ENCODE measurements at regions of chr4 and their contacts with region 1.

Region 1: DNA sequence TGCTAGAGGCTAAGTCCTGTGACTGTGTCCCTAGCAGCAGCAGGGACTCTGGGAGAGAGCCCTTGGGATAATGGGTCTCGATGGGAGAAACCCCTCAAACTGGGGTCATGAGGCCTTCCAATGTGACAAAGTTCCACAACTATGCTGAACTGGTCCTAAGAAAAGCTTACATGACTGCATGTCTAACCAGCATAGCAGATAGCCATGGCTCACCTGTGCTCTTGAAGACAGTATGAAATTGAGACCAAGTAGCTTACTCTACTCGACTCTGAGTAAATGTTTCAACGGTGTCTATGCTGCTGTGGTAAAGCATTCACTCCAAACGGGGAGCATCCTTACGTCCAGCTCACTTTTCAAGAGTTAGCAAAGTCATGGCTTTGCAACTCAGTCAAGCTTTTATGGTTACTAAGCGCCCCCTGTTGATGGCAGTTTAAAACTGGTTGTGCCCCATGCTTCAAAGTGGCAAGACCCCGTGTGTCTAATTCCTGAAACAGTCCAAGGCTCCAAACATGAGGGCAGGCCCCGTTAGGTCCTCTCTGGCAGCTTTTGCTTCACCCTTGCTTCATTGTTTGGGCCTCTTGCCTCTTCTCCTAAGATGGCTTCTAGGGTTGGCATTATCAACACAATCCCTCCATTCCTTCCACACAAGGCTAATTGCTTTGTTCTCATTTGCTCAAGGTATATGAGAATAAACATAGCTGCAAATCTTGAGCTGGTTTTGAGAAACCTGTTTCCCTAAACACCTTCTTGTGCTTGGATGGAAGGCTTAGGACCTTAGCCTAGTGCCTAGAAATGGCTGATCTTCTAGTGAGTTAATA is 46.6 kb downstream of the CCNG2 start:
- DNase-seq: peak; percentile 45 to 68 (median 63)
- H3K4me3 ChIP-seq: no peak overlapping the region
- H3K4me3 Mint-ChIP-seq: no peak overlapping the region
- H3K27ac ChIP-seq: no peak overlapping the region
- H3K27ac Mint-ChIP-seq: no peak overlapping the region
- H3K4me1 ChIP-seq: no peaks in the 10 kb centered on the region
- H3K4me1 Mint-ChIP-seq: no peaks in the 10 kb centered on the region
- H3K27me3 ChIP-seq: no peaks in the 10 kb centered on the region
- H3K27me3 Mint-ChIP-seq: no peaks in the 10 kb centered on the region

Region 2: DNA sequence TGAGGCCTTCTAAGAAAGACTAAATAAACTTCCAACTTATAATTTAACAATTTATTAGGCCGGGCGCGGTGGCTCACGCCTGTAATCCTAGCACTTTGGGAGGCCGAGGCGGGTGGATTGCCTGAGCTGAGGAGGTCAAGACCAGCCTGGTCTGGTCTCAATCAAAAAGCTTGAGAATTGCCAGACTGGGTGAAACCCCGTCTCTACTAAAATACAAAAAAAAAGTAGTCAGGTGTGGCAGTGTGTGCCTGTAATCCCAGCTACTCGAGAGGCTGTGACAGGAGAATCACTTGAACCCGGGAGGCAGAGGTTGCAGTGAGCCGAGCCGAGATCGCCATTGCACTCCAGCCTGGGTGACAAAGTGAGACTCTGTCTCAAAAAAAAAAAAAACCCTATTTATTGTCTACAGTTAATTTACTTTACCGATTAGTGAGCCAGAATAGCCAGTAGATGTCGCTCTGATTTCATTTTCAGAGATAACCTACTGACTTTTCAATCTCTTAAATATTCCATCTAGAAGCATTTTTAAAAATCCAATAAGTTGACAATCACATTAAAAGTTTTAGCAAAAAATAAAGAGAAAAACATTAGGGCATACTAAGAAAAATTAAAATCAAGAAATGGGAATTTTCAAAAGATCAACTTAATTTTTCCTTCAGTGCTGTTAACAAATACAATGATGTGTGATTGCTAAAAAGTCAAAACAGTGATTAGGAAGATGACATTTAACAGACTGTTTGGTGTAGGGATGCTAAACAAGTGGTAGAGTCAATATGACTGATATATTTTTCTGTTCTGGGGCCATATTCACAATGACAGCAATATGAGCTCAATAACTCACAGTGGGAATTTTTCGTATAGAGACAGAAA is 772.8 kb before region 1 on chr4:
- CTCF ChIA-PET with region 1: interaction called, 41 read pairs
- POLR2A ChIA-PET with region 1: no interaction called
- intact Hi-C with region 1: loop called (anchors 2 kb)
- DNase-seq: peak in 4 of 5 donors; percentile 15 to 28 (median 18)
- H3K4me3 ChIP-seq: no peak overlapping the region
- H3K4me3 Mint-ChIP-seq: no peak overlapping the region
- H3K27ac ChIP-seq: no peak overlapping the region
- H3K27ac Mint-ChIP-seq: no peak overlapping the region
- H3K4me1 ChIP-seq: no peaks in the 10 kb centered on the region
- H3K4me1 Mint-ChIP-seq: peaks cover 0 to 2% (median under 1%) of the 10 kb centered on the region in 4 donors
- H3K27me3 ChIP-seq: no peaks in the 10 kb centered on the region
- H3K27me3 Mint-ChIP-seq: peaks cover 7 to 8% of the 10 kb centered on the region in 2 donors

Region 3: GRCh38 chr4:77052352-77052751 is 151.2 kb before region 1 on chr4:
- CTCF ChIA-PET with region 1: interaction called, 148 read pairs
- POLR2A ChIA-PET with region 1: interaction called, 3 read pairs
- intact Hi-C with region 1: loop called (anchors 1 kb)
- DNase-seq: peak in 4 of 5 donors; percentile 38 to 59 (median 42)
- H3K4me3 ChIP-seq: no peak overlapping the region
- H3K4me3 Mint-ChIP-seq: no peak overlapping the region
- H3K27ac ChIP-seq: no peak overlapping the region
- H3K27ac Mint-ChIP-seq: peak overlapping the region in 6 of 7 donors; percentile 61 to 70 (median 68)
- H3K4me1 ChIP-seq: no peaks in the 10 kb centered on the region
- H3K4me1 Mint-ChIP-seq: peaks cover 0 to 15% (median 5%) of the 10 kb centered on the region in 4 donors
- H3K27me3 ChIP-seq: no peaks in the 10 kb centered on the region
- H3K27me3 Mint-ChIP-seq: no peaks in the 10 kb centered on the region

Region 4: GRCh38 chr4:77095101-77095821 is 108.3 kb before region 1 on chr4:
- CTCF ChIA-PET with region 1: interaction called, 440 read pairs
- POLR2A ChIA-PET with region 1: interaction called, 9 read pairs
- intact Hi-C with region 1: loop called (anchors 1 kb)
- DNase-seq: peak; percentile 58 to 70 (median 64)
- H3K4me3 ChIP-seq: no peak overlapping the region
- H3K4me3 Mint-ChIP-seq: no peak overlapping the region
- H3K27ac ChIP-seq: no peak overlapping the region
- H3K27ac Mint-ChIP-seq: peak overlapping the region in 1 of 7 donors; percentile 5
- H3K4me1 ChIP-seq: peaks cover 11% of the 10 kb centered on the region
- H3K4me1 Mint-ChIP-seq: peaks cover 9 to 19% (median 13%) of the 10 kb centered on the region in 4 donors
- H3K27me3 ChIP-seq: no peaks in the 10 kb centered on the region
- H3K27me3 Mint-ChIP-seq: no peaks in the 10 kb centered on the region

Region 5: DNA sequence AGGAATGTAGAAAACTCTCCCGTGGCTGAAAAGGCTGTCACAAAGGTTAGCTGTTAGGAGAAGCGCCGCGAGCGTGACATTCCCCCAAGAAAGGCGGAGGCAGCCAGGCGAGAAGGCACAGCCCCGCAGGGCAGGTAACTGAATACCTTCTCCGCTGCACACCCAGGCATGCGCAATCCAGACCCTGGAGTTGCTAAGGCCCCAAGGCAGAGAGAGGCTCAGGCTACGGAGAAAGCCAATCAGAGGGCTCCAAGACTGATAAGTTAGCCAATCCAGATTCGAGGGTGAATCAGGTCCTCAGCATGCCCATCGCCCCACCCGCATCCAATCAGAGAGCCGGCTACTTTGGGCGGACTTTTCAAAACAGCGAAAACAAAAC is 47.1 kb before region 1 on chr4:
- CTCF ChIA-PET with region 1: interaction called, 31 read pairs
- POLR2A ChIA-PET with region 1: interaction called, 3 read pairs
- intact Hi-C with region 1: no loop called
- DNase-seq: peak; percentile 99
- H3K4me3 ChIP-seq: peak overlapping the region; percentile 87 to 98
- H3K4me3 Mint-ChIP-seq: peak overlapping the region; percentile 92 to 100 (median 98)
- H3K27ac ChIP-seq: peak overlapping the region; percentile 77
- H3K27ac Mint-ChIP-seq: peak overlapping the region; percentile 97 to 99 (median 98)
- H3K4me1 ChIP-seq: peaks cover 35% of the 10 kb centered on the region
- H3K4me1 Mint-ChIP-seq: peaks cover 16 to 54% (median 24%) of the 10 kb centered on the region in 4 donors
- H3K27me3 ChIP-seq: no peaks in the 10 kb centered on the region
- H3K27me3 Mint-ChIP-seq: peaks cover 0 to 6% of the 10 kb centered on the region in 2 donors

Region 6: DNA sequence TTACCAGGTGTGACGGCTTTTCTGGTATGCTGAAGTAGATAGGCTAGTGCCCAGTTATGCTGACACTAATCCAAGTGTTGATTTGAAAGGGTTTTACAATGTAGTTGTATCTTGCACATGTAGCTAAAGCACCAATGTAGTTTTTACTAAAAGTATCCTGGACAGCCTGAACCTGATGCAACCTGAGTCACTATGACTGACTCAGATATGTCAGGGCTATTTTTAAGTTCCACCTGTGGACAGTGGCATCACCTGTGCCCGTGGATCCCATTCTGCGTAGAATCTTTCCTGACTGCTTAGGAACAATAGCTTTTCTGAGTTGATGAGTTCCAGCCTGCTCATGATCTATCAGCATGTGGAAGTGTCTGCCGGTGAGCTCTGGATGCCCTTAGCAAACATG is 11.5 kb after region 1 on chr4:
- CTCF ChIA-PET with region 1: interaction called, 37 read pairs
- POLR2A ChIA-PET with region 1: no interaction called
- intact Hi-C with region 1: no loop called
- DNase-seq: no peak
- H3K4me3 ChIP-seq: no peak overlapping the region
- H3K4me3 Mint-ChIP-seq: no peak overlapping the region
- H3K27ac ChIP-seq: no peak overlapping the region
- H3K27ac Mint-ChIP-seq: no peak overlapping the region
- H3K4me1 ChIP-seq: no peaks in the 10 kb centered on the region
- H3K4me1 Mint-ChIP-seq: no peaks in the 10 kb centered on the region
- H3K27me3 ChIP-seq: no peaks in the 10 kb centered on the region
- H3K27me3 Mint-ChIP-seq: peaks cover 2 to 4% of the 10 kb centered on the region in 2 donors

Measured in CD4-positive, alpha-beta memory T cell (primary cell).